ENCODE measurements at regions of chr11 and their contacts with region 1.

Region 1: DNA sequence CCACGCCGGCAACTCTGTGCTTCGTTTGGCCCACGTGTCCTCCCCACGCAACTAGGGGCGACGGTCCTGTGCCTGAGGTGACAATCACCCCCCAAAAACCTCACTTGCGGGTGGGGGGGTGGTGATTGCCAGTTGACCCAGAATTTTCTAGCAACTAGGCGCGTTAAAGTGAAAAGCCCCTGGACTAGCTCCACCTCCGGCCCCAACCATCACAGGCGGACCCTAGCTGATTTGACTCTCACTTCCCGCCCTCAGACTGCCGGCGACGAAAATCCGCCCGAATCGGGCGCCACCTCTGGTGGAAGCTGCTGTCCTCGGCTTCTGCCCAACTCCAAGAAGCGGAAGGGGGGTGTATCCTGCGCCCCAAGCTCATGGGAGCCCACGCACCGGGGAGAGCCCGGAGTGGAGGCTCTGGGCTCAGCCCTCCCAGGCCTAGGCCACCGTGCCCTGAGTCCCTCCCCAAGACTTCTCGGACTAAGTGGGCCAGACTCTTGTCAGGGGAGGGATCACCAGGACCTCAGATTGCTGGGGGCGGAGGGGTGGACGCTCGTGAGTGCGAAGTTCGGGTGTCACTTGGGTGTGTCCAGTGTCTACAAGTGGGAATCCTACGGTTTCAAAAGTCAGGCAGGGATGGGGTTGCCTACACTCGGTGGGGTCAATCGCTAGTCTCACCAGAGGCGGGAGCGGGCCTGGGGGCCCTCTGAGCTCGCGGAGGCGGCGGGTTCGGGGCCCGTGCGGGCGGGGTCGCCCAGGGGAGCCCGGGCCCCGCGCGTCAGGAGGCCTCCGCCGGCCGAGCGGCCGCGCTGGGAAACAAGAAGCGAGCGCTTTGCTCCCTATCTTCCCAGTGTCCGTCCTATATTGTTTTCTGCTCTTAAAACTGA is 12.3 kb downstream of the PAX6 start:
- DNase-seq: no peak
- H3K4me3 ChIP-seq: no peak overlapping the region
- H3K27ac ChIP-seq: no peak overlapping the region
- H3K4me1 ChIP-seq: peaks cover 5% of the 10 kb centered on the region
- H3K27me3 ChIP-seq: peaks cover 88 to 95% of the 10 kb centered on the region in 2 experiments
- CTCF ChIP-seq: peak in 1 of 2 donors; percentile 26
- POLR2A ChIP-seq: no peak

Region 2: DNA sequence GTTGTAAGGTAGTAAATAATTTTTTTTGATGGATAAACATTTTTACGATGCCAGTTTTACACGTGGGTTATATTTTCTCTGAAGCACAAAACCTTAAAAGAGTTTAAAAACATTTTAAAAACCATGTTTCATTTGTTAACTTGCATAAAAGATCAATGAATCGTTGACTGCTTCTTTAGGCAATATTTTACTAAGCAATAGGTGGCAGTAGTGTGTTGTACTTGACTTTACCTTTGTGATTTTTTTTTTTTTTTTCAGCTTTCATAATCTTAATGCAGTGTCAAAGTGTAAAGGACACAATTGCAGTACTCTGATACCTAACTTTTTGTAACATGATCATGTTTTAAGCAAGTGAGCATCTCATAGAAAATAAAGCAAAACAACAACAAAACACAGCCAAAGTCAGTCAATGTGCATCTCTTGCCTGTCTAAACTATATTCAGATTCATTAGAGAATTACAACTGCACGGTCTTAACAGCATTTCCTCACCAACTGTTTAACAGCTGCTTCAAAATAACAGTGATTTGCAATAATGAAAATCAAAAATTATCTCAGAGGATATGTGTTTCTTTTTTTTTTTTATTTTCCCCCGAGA is 401.5 kb before region 1 on chr11:
- CTCF ChIA-PET with region 1: no interaction called
- POLR2A ChIA-PET with region 1: no interaction called
- dilution Hi-C with region 1: no loop called
- intact Hi-C with region 1: loop called (anchors 10 kb)
- DNase-seq: peak; percentile 39
- H3K4me3 ChIP-seq: no peak overlapping the region
- H3K27ac ChIP-seq: no peak overlapping the region
- H3K4me1 ChIP-seq: no peaks in the 10 kb centered on the region
- H3K27me3 ChIP-seq: no peaks in the 10 kb centered on the region
- CTCF ChIP-seq: peak; percentile 37 to 39
- POLR2A ChIP-seq: no peak

Region 3: GRCh38 chr11:31810779-31811647 is 12.2 kb after region 1 on chr11 and contains the start of gene PAX6:
- CTCF ChIA-PET with region 1: interaction called, 3 read pairs
- POLR2A ChIA-PET with region 1: no interaction called
- dilution Hi-C with region 1: no loop called
- intact Hi-C with region 1: loop called (anchors 1 kb)
- DNase-seq: peak; percentile 66
- H3K4me3 ChIP-seq: peak within 1 kb of the TSS in 1 of 3 experiments; percentile 11
- H3K27ac ChIP-seq: no peak within 1 kb of the TSS
- H3K4me1 ChIP-seq: peaks cover 4% of the 10 kb centered on the region
- H3K27me3 ChIP-seq: peaks cover 89 to 99% of the 10 kb centered on the region in 2 experiments
- CTCF ChIP-seq: no peak
- POLR2A ChIP-seq: no peak
- total RNA-seq, gene PAX6: not detected in 2 replicates

Region 4: DNA sequence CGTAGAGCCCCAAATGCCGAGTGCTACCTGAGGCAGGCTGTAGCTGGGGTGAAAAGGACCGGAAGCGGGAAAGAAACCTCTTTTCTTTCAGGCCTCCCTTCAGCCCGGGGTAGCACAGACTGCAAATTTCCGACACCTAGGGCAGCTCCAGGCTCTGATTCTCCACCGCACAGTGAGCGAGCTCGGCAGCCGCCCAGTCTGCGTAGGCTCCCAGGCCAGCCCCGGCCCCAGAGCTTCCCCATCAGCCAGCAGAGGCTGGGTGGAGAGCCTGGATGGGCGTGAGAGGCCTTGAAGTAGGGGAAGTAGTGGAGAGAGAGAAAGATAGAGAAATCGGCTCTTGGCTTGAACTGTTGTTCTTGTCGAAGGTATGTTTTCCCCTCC is 21.6 kb after region 1 on chr11:
- CTCF ChIA-PET with region 1: no interaction called
- POLR2A ChIA-PET with region 1: no interaction called
- dilution Hi-C with region 1: no loop called
- intact Hi-C with region 1: loop called (anchors 2 kb)
- DNase-seq: no peak
- H3K4me3 ChIP-seq: no peak overlapping the region
- H3K27ac ChIP-seq: no peak overlapping the region
- H3K4me1 ChIP-seq: peaks cover 2% of the 10 kb centered on the region
- H3K27me3 ChIP-seq: peaks cover 95 to 99% of the 10 kb centered on the region in 2 experiments
- CTCF ChIP-seq: no peak
- POLR2A ChIP-seq: no peak